HCT116 (cell line): ENCODE measurements at regions of chr7 and their contacts with region 1.

Region 1: DNA sequence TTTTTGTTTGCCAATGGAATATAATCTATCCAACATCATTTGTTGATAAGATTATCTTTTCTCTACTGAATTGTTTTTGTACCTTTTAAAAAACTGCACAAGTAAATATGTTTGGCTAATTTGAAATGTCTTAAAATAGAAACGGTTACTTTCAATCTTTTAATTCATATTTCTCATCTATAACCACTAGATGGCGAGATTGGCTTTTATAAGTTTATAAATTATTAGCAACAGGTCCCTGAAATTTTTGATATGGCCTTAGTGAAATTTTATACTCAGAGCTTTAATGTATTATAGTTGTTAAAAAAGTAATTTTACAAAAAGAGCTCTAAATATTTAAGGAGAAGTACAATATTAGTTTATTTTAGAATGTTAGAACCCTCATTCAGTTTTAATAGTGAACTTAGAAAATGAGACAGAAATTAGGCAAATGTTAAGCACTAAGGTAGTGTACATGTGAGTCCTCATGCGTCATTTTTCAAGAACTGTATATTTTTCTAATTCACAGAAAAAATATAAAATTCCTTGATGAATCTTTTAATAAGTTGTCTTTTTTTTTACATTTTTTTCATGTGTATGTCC is 592.5 kb downstream of the ARL4A start:
- DNase-seq: peak; percentile 15
- ATAC-seq: no peak
- H3K4me3 ChIP-seq: no peak overlapping the region
- H3K27ac ChIP-seq: no peak overlapping the region
- H3K4me1 ChIP-seq: no peaks in the 10 kb centered on the region
- H3K27me3 ChIP-seq: no peaks in the 10 kb centered on the region
- CTCF ChIP-seq: peak in 2 of 3 experiments; percentile 38 to 64; a peak in 3 of 6 replicates
- POLR2A ChIP-seq: no peak
- RAD21 ChIP-seq: peak; percentile 62

Region 2: DNA sequence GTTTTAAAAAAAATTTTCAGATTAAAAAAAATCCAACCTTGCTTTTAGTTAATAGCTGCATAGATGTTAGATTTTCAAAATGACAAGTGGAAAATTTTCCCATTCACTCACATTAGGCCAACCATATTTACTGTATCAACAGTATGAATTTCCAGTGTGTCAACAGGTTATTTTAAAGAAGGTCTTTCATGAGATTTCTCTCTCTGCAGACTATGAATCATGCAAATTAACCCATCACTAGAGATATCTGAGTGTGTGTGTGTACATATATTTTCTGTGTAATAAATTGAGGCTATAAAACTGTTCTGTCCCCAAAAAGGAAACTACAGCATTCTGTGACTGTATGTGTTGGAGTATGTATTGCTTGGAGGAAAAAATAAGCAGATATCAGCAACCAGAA is 286.9 kb before region 1 on chr7:
- CTCF ChIA-PET with region 1: no interaction called
- POLR2A ChIA-PET with region 1: no interaction called
- RAD21 ChIA-PET with region 1: no interaction called
- intact Hi-C with region 1: no loop called
- DNase-seq: no peak
- ATAC-seq: no peak
- H3K4me3 ChIP-seq: no peak overlapping the region
- H3K27ac ChIP-seq: no peak overlapping the region
- H3K4me1 ChIP-seq: no peaks in the 10 kb centered on the region
- H3K27me3 ChIP-seq: no peaks in the 10 kb centered on the region
- CTCF ChIP-seq: no peak
- POLR2A ChIP-seq: no peak
- RAD21 ChIP-seq: no peak

Region 3: GRCh38 chr7:13179102-13179501 is 100.8 kb before region 1 on chr7:
- CTCF ChIA-PET with region 1: no interaction called
- POLR2A ChIA-PET with region 1: no interaction called
- RAD21 ChIA-PET with region 1: no interaction called
- intact Hi-C with region 1: no loop called
- DNase-seq: no peak
- ATAC-seq: peak; percentile 55; the same call in 1 of the 2 replicates
- H3K4me3 ChIP-seq: no peak overlapping the region
- H3K27ac ChIP-seq: no peak overlapping the region
- H3K4me1 ChIP-seq: no peaks in the 10 kb centered on the region
- H3K27me3 ChIP-seq: no peaks in the 10 kb centered on the region
- CTCF ChIP-seq: peak; percentile 31 to 37 (median 36); a peak in 3 of 6 replicates
- POLR2A ChIP-seq: no peak
- RAD21 ChIP-seq: peak; percentile 67

Region 4: GRCh38 chr7:13524076-13524475 is 244.1 kb after region 1 on chr7:
- CTCF ChIA-PET with region 1: interaction called, 4 read pairs
- POLR2A ChIA-PET with region 1: no interaction called
- RAD21 ChIA-PET with region 1: no interaction called
- intact Hi-C with region 1: loop called (anchors 10 kb)
- DNase-seq: no peak
- ATAC-seq: no peak
- H3K4me3 ChIP-seq: no peak overlapping the region
- H3K27ac ChIP-seq: no peak overlapping the region
- H3K4me1 ChIP-seq: no peaks in the 10 kb centered on the region
- H3K27me3 ChIP-seq: no peaks in the 10 kb centered on the region
- CTCF ChIP-seq: no peak
- POLR2A ChIP-seq: no peak
- RAD21 ChIP-seq: no peak

Region 5: DNA sequence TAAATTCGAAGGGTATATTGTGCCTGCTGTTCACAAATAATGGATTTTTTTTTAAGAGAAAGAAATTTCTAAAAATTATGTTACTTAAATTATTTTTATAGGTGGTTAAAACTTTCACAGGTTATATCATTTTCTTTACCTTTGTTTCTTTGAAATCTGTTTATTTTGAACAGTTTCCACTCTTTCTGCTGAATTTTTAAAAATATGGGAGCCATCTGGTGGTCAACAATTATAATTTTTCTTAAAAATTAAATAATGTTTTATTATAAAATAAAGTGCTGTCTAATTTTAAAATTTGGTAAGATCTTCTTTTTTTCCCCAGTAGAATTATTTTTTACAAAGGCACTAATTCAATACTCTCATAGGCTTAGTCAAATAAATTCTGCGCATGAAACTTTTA is 445.6 kb after region 1 on chr7:
- CTCF ChIA-PET with region 1: interaction called, 3 read pairs
- POLR2A ChIA-PET with region 1: no interaction called
- RAD21 ChIA-PET with region 1: no interaction called
- intact Hi-C with region 1: loop called (anchors 5 kb)
- DNase-seq: no peak
- ATAC-seq: no peak
- H3K4me3 ChIP-seq: no peak overlapping the region
- H3K27ac ChIP-seq: no peak overlapping the region
- H3K4me1 ChIP-seq: no peaks in the 10 kb centered on the region
- H3K27me3 ChIP-seq: no peaks in the 10 kb centered on the region
- CTCF ChIP-seq: 0 out of 6 replicates have a peak, but pooled peaks of 1 of the 3 experiments have one; percentile 4
- POLR2A ChIP-seq: no peak
- RAD21 ChIP-seq: no peak

Region 6: GRCh38 chr7:13742811-13743210 is 462.9 kb after region 1 on chr7:
- CTCF ChIA-PET with region 1: interaction called, 16 read pairs
- POLR2A ChIA-PET with region 1: no interaction called
- RAD21 ChIA-PET with region 1: interaction called, 3 to 5 read pairs
- intact Hi-C with region 1: loop called (anchors 5 kb)
- DNase-seq: peak; percentile 39
- ATAC-seq: peak; percentile 77
- H3K4me3 ChIP-seq: no peak overlapping the region
- H3K27ac ChIP-seq: no peak overlapping the region
- H3K4me1 ChIP-seq: peaks cover 0 to 17% of the 10 kb centered on the region in 2 experiments; a peak in 3 of 4 replicates
- H3K27me3 ChIP-seq: no peaks in the 10 kb centered on the region
- CTCF ChIP-seq: peak; percentile 31 to 67 (median 48); a peak in 5 of 6 replicates
- POLR2A ChIP-seq: no peak
- RAD21 ChIP-seq: peak; percentile 59; the same call in 1 of the 2 replicates

Region 7: GRCh38 chr7:14457568-14458453 is 1177.9 kb after region 1 on chr7:
- CTCF ChIA-PET with region 1: interaction called, 3 read pairs
- POLR2A ChIA-PET with region 1: no interaction called
- RAD21 ChIA-PET with region 1: no interaction called
- intact Hi-C with region 1: loop called (anchors 1 kb)
- DNase-seq: peak; percentile 83
- ATAC-seq: peak; percentile 90
- H3K4me3 ChIP-seq: 0 out of 4 replicates have a peak overlapping the region, but pooled peaks of 1 of the 2 experiments have one; percentile 16
- H3K27ac ChIP-seq: no peak overlapping the region
- H3K4me1 ChIP-seq: peaks cover 3 to 4% of the 10 kb centered on the region in 2 experiments; a peak in 3 of 4 replicates
- H3K27me3 ChIP-seq: no peaks in the 10 kb centered on the region
- CTCF ChIP-seq: peak; percentile 60 to 80 (median 71)
- POLR2A ChIP-seq: no peak
- RAD21 ChIP-seq: peak; percentile 88

Region 8: DNA sequence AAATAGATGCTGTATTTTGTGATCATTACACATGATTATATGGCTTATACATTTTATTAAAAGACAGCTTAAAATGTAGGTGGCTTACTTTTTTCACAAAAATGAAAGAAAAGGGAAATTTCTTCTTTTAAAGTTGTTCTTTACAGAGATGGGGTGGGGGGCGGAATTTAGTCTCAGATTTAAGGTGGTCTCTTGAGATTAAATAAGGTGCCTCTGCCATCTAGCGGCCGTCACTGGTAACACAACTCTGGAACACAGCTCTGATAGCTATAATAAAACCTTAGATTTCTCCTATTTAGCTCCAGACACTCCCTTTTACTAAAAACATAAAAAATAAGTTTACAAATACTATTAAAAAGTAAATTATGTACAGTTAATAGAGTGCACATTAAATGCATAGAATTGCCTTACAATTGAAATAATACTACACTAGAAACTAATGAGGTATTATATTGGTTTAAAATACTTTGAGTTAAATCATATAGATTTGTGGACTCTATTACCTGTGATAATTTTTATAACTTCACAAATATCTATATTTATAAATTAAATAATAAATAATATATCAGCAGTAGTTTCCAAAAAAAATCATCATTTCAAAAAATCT is 1411.8 kb after region 1 on chr7:
- CTCF ChIA-PET with region 1: interaction called, 154 read pairs
- POLR2A ChIA-PET with region 1: interaction called, 4 read pairs
- RAD21 ChIA-PET with region 1: interaction called, 11 to 17 read pairs
- intact Hi-C with region 1: loop called (anchors 1 kb)
- DNase-seq: peak; percentile 32
- ATAC-seq: peak; percentile 53; the same call in 1 of the 2 replicates
- H3K4me3 ChIP-seq: no peak overlapping the region
- H3K27ac ChIP-seq: no peak overlapping the region
- H3K4me1 ChIP-seq: no peaks in the 10 kb centered on the region
- H3K27me3 ChIP-seq: no peaks in the 10 kb centered on the region
- CTCF ChIP-seq: peak; percentile 52 to 88 (median 65); a peak in 5 of 6 replicates
- POLR2A ChIP-seq: no peak
- RAD21 ChIP-seq: peak; percentile 73

Region 9: DNA sequence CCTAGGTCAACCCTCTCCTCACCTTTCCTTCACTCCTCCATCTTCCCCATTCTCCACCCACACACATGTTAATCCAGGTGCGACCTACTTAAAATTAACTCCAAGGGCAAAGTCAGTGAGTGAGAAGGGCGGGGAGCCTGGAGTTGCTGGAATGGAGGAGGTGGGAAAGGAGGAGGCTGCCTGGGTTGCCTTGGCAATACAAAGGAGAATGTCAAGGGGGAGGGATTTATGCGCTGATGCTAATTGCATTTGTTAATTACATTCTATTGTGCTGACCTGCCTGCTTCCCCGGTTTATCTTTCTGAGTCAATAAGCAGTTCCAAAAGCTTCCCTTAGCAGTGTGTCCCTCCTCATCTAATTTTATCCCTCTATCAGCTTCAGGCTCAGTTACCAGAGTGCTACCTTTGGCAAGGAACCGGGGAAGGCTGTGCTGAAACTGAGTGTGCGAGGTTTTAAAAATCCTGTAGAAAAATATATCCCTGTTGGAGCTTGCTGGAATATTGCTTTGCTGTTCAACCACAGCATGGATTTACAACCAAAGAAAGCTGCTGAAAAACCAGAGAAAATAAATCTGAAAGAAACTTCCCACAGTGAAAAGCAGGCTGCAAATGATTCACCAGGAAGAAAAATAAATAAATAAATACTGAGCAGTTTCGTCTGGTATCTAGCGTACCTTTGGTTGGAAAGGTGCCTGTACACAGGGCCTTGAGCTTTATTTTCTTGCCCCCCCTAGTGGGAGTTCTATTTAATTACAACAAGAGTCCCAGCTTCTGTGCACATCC is 1735.8 kb after region 1 on chr7:
- CTCF ChIA-PET with region 1: no interaction called
- POLR2A ChIA-PET with region 1: no interaction called
- RAD21 ChIA-PET with region 1: interaction called in 1 of 2 experiments, 4 read pairs
- intact Hi-C with region 1: loop called (anchors 10 kb)
- DNase-seq: peak; percentile 87
- ATAC-seq: peak; percentile 96
- H3K4me3 ChIP-seq: peak overlapping the region; percentile 7 to 26; a peak in 2 of 4 replicates
- H3K27ac ChIP-seq: peak overlapping the region; percentile 22; the same call in 1 of the 2 replicates
- H3K4me1 ChIP-seq: peaks cover 6 to 21% of the 10 kb centered on the region in 2 experiments; a peak in 3 of 4 replicates
- H3K27me3 ChIP-seq: no peaks in the 10 kb centered on the region
- CTCF ChIP-seq: peak; percentile 54 to 72 (median 67); a peak in 5 of 6 replicates
- POLR2A ChIP-seq: no peak
- RAD21 ChIP-seq: peak; percentile 79